Activated CD8-positive, alpha-beta T cell treated with anti-CD3 and anti-CD28 coated beads, Interleukin-2, amount 10 ng/mL, durations not matched to agents 7 days and 5 days (primary cell): ENCODE measurements at regions of chr1 and their contacts with region 1.

Region 1: DNA sequence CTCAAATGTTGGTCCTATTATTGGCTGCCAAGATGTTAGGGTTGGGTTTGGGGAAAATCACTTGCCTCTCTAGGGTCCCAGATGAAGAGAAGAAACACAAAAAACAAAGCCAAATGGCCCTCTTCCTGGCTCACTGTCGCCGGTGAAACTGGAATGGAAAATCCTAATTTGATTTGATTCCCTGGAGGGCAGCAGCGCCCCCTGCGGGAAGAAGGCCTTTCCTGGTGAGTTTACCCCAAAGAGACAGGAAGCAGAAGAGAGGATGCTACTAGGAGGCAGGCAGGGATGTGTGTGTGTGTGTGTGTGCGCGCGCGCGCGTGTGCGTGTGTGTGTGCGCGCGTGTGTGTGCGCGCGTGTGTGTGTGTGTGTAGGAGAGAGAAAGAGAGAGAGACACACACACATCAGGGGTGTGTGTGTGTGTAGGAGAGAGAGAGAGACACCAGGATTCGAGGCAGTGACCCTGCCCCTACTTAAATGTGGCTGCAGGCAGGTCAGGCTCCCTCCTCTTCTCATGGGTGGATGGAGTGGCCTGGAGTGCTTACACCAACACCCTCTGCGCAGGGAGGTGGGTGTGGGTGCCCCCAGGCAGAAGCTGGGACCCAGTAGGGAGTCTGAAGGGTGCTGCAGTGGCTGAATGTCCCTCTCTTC is 3.1 kb upstream of the SELENON start:
- DNase-seq: peak; percentile 87
- ATAC-seq: peak; percentile 73
- H3K4me3 Mint-ChIP-seq: peak overlapping the region; percentile 33
- H3K27ac Mint-ChIP-seq: peak overlapping the region; percentile 70
- H3K4me1 Mint-ChIP-seq: peaks cover 50% of the 10 kb centered on the region
- H3K27me3 Mint-ChIP-seq: peaks cover 13% of the 10 kb centered on the region

Region 2: DNA sequence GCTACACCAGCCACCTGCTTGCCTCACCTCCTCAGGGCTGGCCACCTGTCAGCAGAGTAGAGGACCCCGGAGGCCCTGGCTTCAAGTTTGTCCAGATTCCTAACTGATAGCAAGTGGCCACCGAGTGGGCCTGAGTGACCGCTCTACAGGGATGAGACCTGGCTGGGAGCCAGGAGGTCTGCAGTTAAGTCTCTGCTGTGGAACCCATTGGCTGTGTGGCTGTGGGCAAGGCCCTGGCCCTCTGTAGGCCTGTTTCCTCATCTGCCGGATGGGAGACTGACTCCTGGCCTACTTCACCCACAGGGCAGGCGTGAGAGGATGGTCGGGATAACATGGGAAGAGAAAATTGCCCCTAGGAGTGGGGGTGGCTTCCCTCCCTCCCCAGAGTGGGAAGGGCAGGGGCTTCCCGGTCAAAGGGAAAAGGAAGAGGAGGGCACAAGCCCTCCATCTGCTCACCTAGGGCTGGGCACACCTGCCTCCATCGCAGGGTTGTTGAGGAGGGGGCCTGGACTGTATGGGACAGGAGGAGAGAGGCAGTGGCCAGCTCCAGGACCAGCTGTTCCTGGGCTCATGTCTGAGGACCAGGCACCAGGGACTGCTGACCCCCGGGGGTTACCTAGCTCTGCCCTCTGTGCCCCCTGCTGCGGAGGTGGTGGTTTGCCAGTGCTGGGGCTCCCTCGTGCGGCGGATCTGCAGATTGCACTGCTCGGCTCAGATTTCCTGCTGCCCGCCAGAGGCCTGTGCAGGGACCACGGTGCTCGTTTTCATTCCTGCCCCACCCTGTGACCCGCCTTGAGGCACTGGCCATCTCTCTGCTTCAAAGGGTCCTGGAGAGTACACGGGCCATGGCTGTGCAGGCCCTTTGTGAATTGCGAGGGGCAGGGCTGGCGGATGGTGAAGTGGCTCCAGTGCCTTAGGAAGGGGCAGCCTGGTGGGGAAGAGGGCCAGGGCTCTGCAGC is 13.7 kb after region 1 on chr1:
- CTCF ChIA-PET with region 1: interaction called, 23 read pairs
- POLR2A ChIA-PET with region 1: no interaction called
- DNase-seq: peak; percentile 86
- ATAC-seq: peak; percentile 88
- H3K4me3 Mint-ChIP-seq: no peak overlapping the region
- H3K27ac Mint-ChIP-seq: no peak overlapping the region
- H3K4me1 Mint-ChIP-seq: peaks cover 7% of the 10 kb centered on the region
- H3K27me3 Mint-ChIP-seq: no peaks in the 10 kb centered on the region